ENCODE measurements at regions of chr11 and their contacts with region 1.

Region 1: GRCh38 chr11:19742588-19743292 is 30.1 kb downstream of the NAV2 start:
- DNase-seq: peak; percentile 82 to 84
- H3K4me3 ChIP-seq: no peak overlapping the region
- H3K4me3 Mint-ChIP-seq: no peak overlapping the region
- H3K27ac Mint-ChIP-seq: no peak overlapping the region
- H3K4me1 ChIP-seq: no peaks in the 10 kb centered on the region
- H3K4me1 Mint-ChIP-seq: no peaks in the 10 kb centered on the region
- H3K27me3 ChIP-seq: no peaks in the 10 kb centered on the region
- H3K27me3 Mint-ChIP-seq: no peaks in the 10 kb centered on the region
- CTCF ChIP-seq: peak; percentile 77 to 86

Region 2: DNA sequence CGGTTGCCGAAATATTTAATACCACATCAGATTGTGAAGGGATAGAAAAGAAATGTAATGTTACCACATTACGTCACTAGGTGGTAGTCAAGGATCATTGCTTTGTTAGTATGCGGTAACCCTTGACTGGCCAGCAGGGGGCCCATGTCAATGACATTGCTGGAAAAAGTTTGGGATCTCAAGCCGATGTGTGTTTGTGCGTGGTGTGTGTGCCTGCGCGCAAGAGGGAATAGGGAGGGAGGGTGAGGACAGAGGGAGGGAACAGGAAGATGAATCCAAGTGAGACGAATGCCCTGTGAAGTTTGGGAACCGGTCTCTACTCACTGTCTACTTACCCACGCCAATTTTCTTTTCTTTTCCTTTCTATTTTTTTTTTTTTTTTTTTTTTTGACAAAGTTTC is 671.5 kb before region 1 on chr11:
- CTCF ChIA-PET with region 1: interaction called, 3 read pairs
- POLR2A ChIA-PET with region 1: no interaction called
- intact Hi-C with region 1: loop called (anchors 1 kb)
- DNase-seq: peak; percentile 83 to 84
- H3K4me3 ChIP-seq: no peak overlapping the region
- H3K4me3 Mint-ChIP-seq: peak overlapping the region; percentile 29
- H3K27ac Mint-ChIP-seq: no peak overlapping the region
- H3K4me1 ChIP-seq: no peaks in the 10 kb centered on the region; the same call in 1 of the 2 replicates
- H3K4me1 Mint-ChIP-seq: peaks cover 15% of the 10 kb centered on the region
- H3K27me3 ChIP-seq: no peaks in the 10 kb centered on the region
- H3K27me3 Mint-ChIP-seq: peaks cover 8% of the 10 kb centered on the region
- CTCF ChIP-seq: peak; percentile 99

Region 3: GRCh38 chr11:19691815-19692500 is 50.8 kb before region 1 on chr11:
- CTCF ChIA-PET with region 1: no interaction called
- POLR2A ChIA-PET with region 1: no interaction called
- intact Hi-C with region 1: no loop called
- DNase-seq: no peak
- H3K4me3 ChIP-seq: no peak overlapping the region
- H3K4me3 Mint-ChIP-seq: no peak overlapping the region
- H3K27ac Mint-ChIP-seq: no peak overlapping the region
- H3K4me1 ChIP-seq: no peaks in the 10 kb centered on the region
- H3K4me1 Mint-ChIP-seq: no peaks in the 10 kb centered on the region
- H3K27me3 ChIP-seq: 0 out of 2 replicates have a peak, but pooled peaks cover 2% of the 10 kb centered on the region
- H3K27me3 Mint-ChIP-seq: peaks cover 13% of the 10 kb centered on the region
- CTCF ChIP-seq: no peak

Region 4: GRCh38 chr11:19712281-19713220 is 30.2 kb before region 1 on chr11 and contains the start of gene NAV2:
- CTCF ChIA-PET with region 1: interaction called, 5 read pairs
- POLR2A ChIA-PET with region 1: no interaction called
- intact Hi-C with region 1: loop called (anchors 1 kb)
- DNase-seq: peak; percentile 91 to 96
- H3K4me3 ChIP-seq: peak within 1 kb of the TSS; percentile 48
- H3K4me3 Mint-ChIP-seq: peak within 1 kb of the TSS; percentile 93
- H3K27ac Mint-ChIP-seq: peak within 1 kb of the TSS; percentile 97
- H3K4me1 ChIP-seq: peaks cover 7% of the 10 kb centered on the region
- H3K4me1 Mint-ChIP-seq: peaks cover 12% of the 10 kb centered on the region
- H3K27me3 ChIP-seq: no peaks in the 10 kb centered on the region; the same call in 1 of the 2 replicates
- H3K27me3 Mint-ChIP-seq: peaks cover 14% of the 10 kb centered on the region
- CTCF ChIP-seq: peak in 1 of 2 experiments; percentile 8
- total RNA-seq, gene NAV2: 63.5 and 64.7 TPM in 2 replicates

Region 5: DNA sequence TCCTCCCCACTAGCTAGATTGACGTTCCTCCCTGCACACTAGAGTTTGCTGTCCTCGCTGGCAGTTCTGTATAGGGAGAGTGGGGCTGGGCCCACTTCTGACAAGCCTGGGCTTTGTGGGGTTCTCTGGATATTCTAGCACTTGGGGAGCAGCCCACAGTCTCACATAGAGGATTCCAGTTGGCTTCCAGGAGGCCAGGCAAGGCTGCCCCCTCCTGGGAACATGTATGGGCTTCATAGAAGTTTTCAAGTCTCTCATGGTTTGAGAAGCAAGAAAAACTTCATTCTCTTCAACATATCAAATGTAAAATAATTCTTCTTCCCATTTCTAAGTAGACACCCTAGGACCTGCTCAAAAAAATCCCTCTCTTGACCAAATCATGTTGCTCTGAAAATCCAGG is 57.4 kb after region 1 on chr11:
- CTCF ChIA-PET with region 1: no interaction called
- POLR2A ChIA-PET with region 1: no interaction called
- intact Hi-C with region 1: loop called (anchors 1 kb)
- DNase-seq: no peak
- H3K4me3 ChIP-seq: no peak overlapping the region
- H3K4me3 Mint-ChIP-seq: no peak overlapping the region
- H3K27ac Mint-ChIP-seq: peak overlapping the region; percentile 23
- H3K4me1 ChIP-seq: peaks cover 49% of the 10 kb centered on the region
- H3K4me1 Mint-ChIP-seq: peaks cover 44% of the 10 kb centered on the region
- H3K27me3 ChIP-seq: no peaks in the 10 kb centered on the region
- H3K27me3 Mint-ChIP-seq: no peaks in the 10 kb centered on the region
- CTCF ChIP-seq: peak in 1 of 2 experiments; percentile 47